ENCODE measurements at regions of chr18 and their contacts with region 1.

Region 1: DNA sequence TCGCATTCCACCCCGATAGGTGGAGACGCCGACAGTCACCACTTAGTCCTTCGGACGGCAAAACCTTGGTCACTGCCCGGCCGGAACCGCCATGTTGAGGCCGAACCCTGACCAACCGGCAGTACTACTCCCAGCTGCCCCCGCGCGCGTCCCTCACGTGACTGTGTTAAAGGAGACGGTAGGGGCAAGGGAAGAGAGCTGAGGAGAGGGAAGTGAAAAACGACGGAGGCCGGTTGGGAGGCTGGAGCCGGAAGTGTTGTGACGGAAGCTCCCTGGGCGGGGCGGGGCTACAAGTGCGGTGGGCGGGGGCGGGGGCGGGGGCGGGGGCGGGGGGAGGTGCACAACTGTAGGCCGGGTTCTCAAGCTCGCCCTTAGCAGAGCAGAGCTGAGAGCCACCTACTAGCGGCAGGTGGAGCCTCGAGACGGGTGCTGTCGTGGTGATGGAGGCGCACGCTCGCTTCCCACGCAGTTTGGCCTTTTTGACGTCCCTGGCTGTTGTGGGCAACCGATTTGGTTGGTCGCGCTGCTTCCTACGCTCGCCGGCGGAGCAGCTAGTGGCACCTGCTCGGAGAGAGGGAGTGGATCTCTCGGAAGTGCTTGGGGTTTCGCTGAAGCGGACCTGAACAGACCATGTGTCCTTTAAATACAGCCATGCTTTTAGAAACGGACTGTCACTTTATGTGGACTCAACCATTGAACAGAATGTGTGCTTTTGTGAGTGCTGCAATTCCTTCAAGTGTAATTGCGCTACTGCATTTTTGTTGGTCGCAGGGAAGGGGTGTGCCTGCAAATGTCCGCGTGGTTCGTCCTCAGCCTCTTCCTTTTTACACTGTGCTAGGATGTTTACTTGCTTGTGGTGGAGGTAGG is at the start of gene TRAPPC8:
- DNase-seq: peak; percentile 98
- ATAC-seq: peak; percentile 95
- H3K4me3 ChIP-seq: peak within 1 kb of the TSS; percentile 88 to 99 (median 90)
- H3K27ac ChIP-seq: peak within 1 kb of the TSS; percentile 97
- H3K4me1 ChIP-seq: peaks cover 56% of the 10 kb centered on the region
- H3K27me3 ChIP-seq: no peaks in the 10 kb centered on the region; a peak in 1 of 5 replicates
- CTCF ChIP-seq: peak; percentile 66
- EP300 ChIP-seq: peak in 1 of 2 experiments; percentile 42; a peak in 1 of 4 replicates
- POLR2A ChIP-seq: peak; percentile 91 to 96
- RAD21 ChIP-seq: no peak
- total RNA-seq, gene TRAPPC8: 34.6 and 45.0 TPM in 2 replicates

Region 2: DNA sequence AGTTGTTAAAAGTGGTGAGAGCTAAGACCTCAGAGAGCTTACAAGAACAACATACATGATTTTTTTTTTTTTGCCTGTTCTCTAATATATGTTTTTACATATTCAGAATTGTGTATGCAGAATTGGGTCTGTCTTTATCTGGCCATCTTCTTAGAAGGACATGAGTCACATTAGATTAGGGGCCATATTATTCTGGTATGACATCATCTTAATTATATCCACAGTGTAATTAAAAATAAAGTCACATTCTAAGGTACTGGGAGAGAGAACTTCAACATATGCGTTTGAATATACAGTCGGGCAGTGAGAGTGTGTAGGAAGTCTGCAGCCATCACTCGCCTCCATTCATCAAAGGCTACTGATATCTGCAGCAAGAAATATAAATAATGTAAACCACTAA is 989.0 kb before region 1 on chr18:
- CTCF ChIA-PET with region 1: no interaction called
- POLR2A ChIA-PET with region 1: no interaction called
- in situ Hi-C with region 1: no loop called
- intact Hi-C with region 1: no loop called
- DNase-seq: no peak
- ATAC-seq: no peak
- H3K4me3 ChIP-seq: no peak overlapping the region
- H3K27ac ChIP-seq: no peak overlapping the region
- H3K4me1 ChIP-seq: no peaks in the 10 kb centered on the region
- H3K27me3 ChIP-seq: peaks cover 0 to 5% of the 10 kb centered on the region in 2 experiments; a peak in 2 of 5 replicates
- CTCF ChIP-seq: no peak
- EP300 ChIP-seq: no peak
- POLR2A ChIP-seq: no peak
- RAD21 ChIP-seq: no peak

Region 3: DNA sequence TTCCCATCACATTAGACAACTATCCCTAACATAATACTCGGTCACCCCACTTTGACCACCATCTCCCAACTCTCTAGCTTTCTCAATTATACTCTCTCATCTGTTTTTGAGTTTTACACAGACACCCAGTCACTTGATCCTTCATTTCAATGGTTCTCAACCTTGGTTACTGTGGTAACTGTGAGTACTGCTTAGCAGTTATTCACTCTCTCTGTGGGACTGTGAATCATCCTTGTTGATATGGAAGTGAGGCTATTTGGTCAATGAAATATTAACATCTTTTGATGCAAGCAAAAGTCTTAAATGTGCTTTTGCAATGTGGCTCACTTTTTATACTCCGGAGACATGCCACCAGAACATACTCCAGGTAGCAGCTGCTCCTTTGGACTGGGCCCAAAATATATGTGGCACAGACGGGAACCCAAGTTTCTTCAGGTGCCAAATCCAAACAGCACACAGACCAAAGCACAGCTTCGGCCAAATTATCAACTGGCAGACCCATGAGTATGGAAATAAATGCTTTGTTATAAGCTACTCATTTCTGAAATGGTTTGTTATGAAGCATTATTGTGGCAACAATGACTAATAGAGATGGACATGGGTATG is 107.6 kb before region 1 on chr18:
- CTCF ChIA-PET with region 1: no interaction called
- POLR2A ChIA-PET with region 1: interaction called, 3 read pairs
- in situ Hi-C with region 1: no loop called
- intact Hi-C with region 1: loop called (anchors 10 kb)
- DNase-seq: no peak
- ATAC-seq: no peak
- H3K4me3 ChIP-seq: no peak overlapping the region
- H3K27ac ChIP-seq: no peak overlapping the region
- H3K4me1 ChIP-seq: peaks cover 13% of the 10 kb centered on the region
- H3K27me3 ChIP-seq: no peaks in the 10 kb centered on the region
- CTCF ChIP-seq: no peak
- EP300 ChIP-seq: no peak
- POLR2A ChIP-seq: no peak
- RAD21 ChIP-seq: no peak

Region 4: DNA sequence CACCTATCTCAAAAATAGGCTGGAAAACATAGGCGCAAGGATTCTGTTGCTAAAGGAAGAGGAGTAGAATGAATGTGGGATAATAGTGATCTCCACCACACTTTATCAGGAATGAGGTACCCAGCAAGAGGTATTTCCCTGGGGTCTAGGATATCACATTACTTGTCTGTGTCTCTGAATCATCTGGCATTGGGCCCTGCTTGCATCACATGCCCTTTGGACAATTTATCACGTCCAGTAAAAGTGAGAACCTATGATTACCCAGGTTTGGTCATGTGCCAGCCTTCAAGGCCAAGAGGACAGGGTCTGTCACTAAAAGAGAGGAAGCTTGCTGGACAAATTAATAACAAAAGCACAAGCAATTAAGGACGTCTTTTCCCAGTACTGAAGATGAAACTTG is 11.1 kb after region 1 on chr18:
- CTCF ChIA-PET with region 1: no interaction called
- POLR2A ChIA-PET with region 1: interaction called, 63 read pairs
- in situ Hi-C with region 1: no loop called
- intact Hi-C with region 1: no loop called
- DNase-seq: peak; percentile 79
- ATAC-seq: peak; percentile 75
- H3K4me3 ChIP-seq: no peak overlapping the region
- H3K27ac ChIP-seq: no peak overlapping the region
- H3K4me1 ChIP-seq: peaks cover 38% of the 10 kb centered on the region
- H3K27me3 ChIP-seq: no peaks in the 10 kb centered on the region
- CTCF ChIP-seq: no peak
- EP300 ChIP-seq: peak in 1 of 2 experiments; percentile 50; a peak in 1 of 4 replicates
- POLR2A ChIP-seq: no peak
- RAD21 ChIP-seq: no peak

Region 5: GRCh38 chr18:31977270-31977872 is 34.1 kb after region 1 on chr18:
- CTCF ChIA-PET with region 1: no interaction called
- POLR2A ChIA-PET with region 1: interaction called, 3 read pairs
- in situ Hi-C with region 1: no loop called
- intact Hi-C with region 1: loop called (anchors 2 kb)
- DNase-seq: peak; percentile 68
- ATAC-seq: peak; percentile 83
- H3K4me3 ChIP-seq: no peak overlapping the region
- H3K27ac ChIP-seq: no peak overlapping the region
- H3K4me1 ChIP-seq: no peaks in the 10 kb centered on the region
- H3K27me3 ChIP-seq: 0 out of 5 replicates have a peak, but pooled peaks cover 0 to 4% of the 10 kb centered on the region in 2 experiments
- CTCF ChIP-seq: peak; percentile 77
- EP300 ChIP-seq: no peak
- POLR2A ChIP-seq: no peak
- RAD21 ChIP-seq: peak; percentile 67

Region 6: DNA sequence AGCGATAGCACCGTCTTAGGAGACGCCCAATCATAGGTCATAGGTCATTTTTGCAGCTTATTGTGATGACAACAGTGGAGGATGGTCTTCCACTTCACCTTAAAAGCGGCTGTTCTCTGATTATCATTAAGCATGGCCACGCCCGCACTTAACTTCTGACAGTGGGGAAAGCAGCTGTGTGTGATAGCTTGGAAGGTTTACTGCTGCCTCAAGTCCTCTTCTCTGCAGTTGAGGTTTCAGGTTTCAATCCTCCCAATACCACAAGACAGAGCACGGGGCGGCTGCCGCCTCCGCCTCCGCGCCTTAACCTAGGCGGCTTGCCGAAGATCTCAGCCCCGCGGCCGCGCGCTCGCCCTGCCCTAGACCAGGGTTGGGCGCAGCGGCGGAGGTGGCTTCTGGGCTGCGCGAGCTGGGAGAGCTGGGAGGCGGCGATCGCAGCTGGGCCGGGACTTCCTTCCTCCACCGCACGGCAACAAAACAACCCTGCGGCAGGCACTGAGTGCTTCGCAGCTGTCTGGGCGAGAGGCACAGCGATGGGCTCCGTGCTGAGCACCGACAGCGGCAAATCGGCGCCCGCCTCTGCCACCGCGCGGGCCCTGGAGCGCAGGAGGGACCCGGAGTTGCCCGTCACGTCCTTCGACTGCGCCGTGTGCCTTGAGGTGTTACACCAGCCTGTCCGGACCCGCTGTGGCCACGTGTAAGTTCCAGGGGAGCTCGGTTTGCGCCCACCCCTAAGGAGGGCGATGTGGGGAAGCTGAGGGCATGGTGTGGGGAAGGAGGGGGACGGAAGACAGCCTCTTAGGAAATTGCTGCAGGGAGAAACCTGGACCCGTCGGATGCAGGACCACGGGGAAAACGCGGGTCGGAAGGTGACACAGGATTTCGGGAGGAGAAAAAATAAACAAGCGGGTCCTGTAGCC is 75.4 kb after region 1 on chr18 and contains the start of gene RNF125:
- CTCF ChIA-PET with region 1: no interaction called
- POLR2A ChIA-PET with region 1: interaction called, 10 read pairs
- in situ Hi-C with region 1: no loop called
- intact Hi-C with region 1: no loop called
- DNase-seq: peak; percentile 5
- ATAC-seq: peak; percentile 92
- H3K4me3 ChIP-seq: peak within 1 kb of the TSS; percentile 41 to 77 (median 62)
- H3K27ac ChIP-seq: peak within 1 kb of the TSS; percentile 70
- H3K4me1 ChIP-seq: peaks cover 37% of the 10 kb centered on the region
- H3K27me3 ChIP-seq: peaks cover 1 to 8% of the 10 kb centered on the region in 2 experiments; a peak in 2 of 5 replicates
- CTCF ChIP-seq: peak; percentile 25; the same call in 1 of the 2 replicates
- EP300 ChIP-seq: no peak
- POLR2A ChIP-seq: peak in 1 of 2 experiments; percentile 29; a peak in 1 of 4 replicates
- RAD21 ChIP-seq: no peak
- total RNA-seq, gene RNF125: 0.58 and 1.3 TPM in 2 replicates